Dorsolateral prefrontal cortex (tissue), 120 donors: ENCODE measurements at regions of chr14 and their contacts with region 1.

Region 1: GRCh38 chr14:23301288-23301968 is 1.2 kb downstream of the PPP1R3E start:
- DNase-seq: peak; percentile 91 to 99 (median 96)
- H3K4me3 ChIP-seq: peak overlapping the region; percentile 61 to 99 (median 85)
- H3K27ac ChIP-seq: peak overlapping the region; percentile 94 to 100 (median 99)
- H3K27me3 ChIP-seq: no peaks in the 10 kb centered on the region
- CTCF ChIP-seq: peak; percentile 46 to 97 (median 77)

Region 2: GRCh38 chr14:23269193-23269592 is 32.2 kb before region 1 on chr14:
- intact Hi-C with region 1: loop called (anchors 2 to 5 kb)
- DNase-seq: no peak
- H3K4me3 ChIP-seq: no peak overlapping the region
- H3K27ac ChIP-seq: no peak overlapping the region
- H3K27me3 ChIP-seq: no peaks in the 10 kb centered on the region
- CTCF ChIP-seq: no peak

Region 3: GRCh38 chr14:23286020-23286905 is 15.2 kb before region 1 on chr14 and contains the start of gene HOMEZ:
- intact Hi-C with region 1: loop called (anchors 1 to 2 kb)
- DNase-seq: peak; percentile 99
- H3K4me3 ChIP-seq: peak within 1 kb of the TSS; percentile 57 to 97 (median 89)
- H3K27ac ChIP-seq: peak within 1 kb of the TSS; percentile 79 to 99 (median 96)
- H3K27me3 ChIP-seq: no peaks in the 10 kb centered on the region
- CTCF ChIP-seq: peak in 55 of 56 donors; percentile 31 to 80 (median 59)
- total RNA-seq, gene HOMEZ: 5.4 to 16.5 (median 9.1) TPM

Region 4: DNA sequence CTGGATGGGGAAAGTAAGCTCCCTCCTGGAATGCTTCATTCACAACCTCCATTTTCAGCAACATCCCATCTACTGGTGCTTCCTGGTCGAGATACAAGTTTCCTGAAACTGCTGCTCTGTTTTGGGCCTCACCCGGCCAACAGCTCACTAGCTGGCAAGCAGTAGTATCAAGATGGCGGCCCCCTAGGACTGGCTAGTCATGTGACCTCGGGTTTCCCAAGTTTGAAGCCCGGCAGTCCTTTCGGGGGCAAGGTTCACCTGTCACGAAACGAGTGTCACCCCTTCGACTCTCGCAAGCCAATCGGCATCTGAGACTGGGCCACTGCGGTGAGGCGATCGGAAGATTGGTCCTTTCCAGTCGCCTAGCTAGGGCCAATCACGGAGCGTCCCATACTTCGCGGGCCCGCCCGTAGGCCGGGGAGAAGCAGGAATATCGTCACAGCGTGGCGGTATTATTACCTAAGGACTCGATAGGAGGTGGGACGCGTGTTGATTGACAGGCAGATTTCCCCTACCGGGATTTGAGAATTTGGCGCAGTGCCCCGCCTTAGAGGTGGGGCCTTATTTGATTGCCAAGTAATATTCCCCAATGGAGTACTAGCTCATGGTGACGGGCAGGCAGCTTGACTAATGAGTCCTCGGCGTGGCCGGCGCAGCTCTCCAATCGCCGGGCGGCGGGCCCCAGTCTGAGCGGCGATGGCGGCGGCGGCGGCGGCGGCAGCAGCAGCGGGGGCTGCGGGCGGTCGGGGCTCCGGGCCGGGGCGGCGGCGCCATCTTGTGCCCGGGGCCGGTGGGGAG is 19.5 kb after region 1 on chr14 and contains the start of gene PABPN1:
- intact Hi-C with region 1: loop called (anchors 1 kb)
- DNase-seq: peak; percentile 96 to 100 (median 100)
- H3K4me3 ChIP-seq: peak within 1 kb of the TSS; percentile 74 to 97 (median 89)
- H3K27ac ChIP-seq: peak within 1 kb of the TSS; percentile 88 to 99 (median 98)
- H3K27me3 ChIP-seq: no peaks in the 10 kb centered on the region
- CTCF ChIP-seq: peak in 20 of 56 donors; percentile 7 to 44 (median 14)
- total RNA-seq, gene PABPN1: 124 to 236 (median 157) TPM